Sigmoid colon (tissue), 7 donors: ENCODE measurements at regions of chr19 and their contacts with region 1.

Region 1: DNA sequence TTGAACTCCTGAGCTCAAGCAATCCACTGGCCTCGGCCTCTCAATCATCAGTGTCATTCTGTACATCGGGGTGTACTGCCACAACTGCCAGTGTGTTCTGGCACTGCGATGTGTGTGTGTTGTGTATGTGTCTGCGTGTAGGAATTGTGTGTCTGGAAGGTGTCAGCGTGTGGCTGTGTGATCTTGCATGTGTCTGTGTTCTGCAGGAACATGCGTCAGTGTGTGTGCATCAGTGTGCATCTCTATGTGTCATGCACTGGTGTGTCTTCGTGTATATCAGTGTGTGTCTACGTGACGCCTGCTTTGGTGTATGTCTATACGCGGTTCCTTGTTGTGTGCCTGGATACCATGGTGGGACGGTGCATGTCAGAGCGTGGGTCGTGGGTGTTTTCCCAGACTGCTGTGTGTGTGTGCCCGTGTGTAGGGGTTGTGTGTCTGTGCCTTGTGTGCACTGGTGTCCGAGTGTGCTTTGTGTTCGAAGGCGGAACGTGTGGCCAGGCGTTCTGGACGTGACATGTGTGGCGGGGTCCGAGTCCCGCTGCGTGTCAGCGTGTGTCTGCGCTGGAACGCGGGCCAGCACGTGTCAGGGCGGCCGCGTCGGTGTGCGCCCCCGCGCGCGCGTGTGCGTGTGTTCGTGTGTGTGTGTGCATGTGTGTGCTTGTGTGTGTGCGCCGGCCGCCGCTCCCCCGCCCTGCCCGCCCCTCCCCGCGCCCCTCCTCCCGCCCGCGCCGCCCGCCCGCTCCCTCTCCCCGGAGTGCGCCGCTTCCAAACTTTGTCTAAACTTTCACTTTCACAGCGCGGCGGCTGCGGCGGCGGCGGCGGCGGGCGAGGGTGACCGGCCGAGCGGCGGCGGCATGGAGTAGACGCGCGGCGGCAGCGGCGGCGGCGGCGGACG is at the start of gene NFIX:
- DNase-seq: peak; percentile 86
- H3K4me3 ChIP-seq: peak within 1 kb of the TSS; percentile 86 to 97 (median 90)
- H3K27ac ChIP-seq: peak within 1 kb of the TSS; percentile 92 to 98 (median 98)
- H3K4me1 ChIP-seq: peaks cover 0 to 39% (median 35%) of the 10 kb centered on the region in 4 donors
- H3K27me3 ChIP-seq: no peaks in the 10 kb centered on the region
- CTCF ChIP-seq: no peak
- EP300 ChIP-seq: no peak
- POLR2A ChIP-seq: no peak
- total RNA-seq, gene NFIX: 44.1 to 104 (median 58.5) TPM

Region 2: GRCh38 chr19:13079542-13079986 is 84.6 kb after region 1 on chr19:
- intact Hi-C with region 1: loop called (anchors 5 kb)
- DNase-seq: peak; percentile 90
- H3K4me3 ChIP-seq: no peak overlapping the region
- H3K27ac ChIP-seq: peak overlapping the region; percentile 79 to 97 (median 88)
- H3K4me1 ChIP-seq: peaks cover 0 to 84% (median 73%) of the 10 kb centered on the region in 4 donors
- H3K27me3 ChIP-seq: no peaks in the 10 kb centered on the region
- CTCF ChIP-seq: no peak
- EP300 ChIP-seq: peak in 2 of 4 donors; percentile 41 to 56
- POLR2A ChIP-seq: no peak

Region 3: DNA sequence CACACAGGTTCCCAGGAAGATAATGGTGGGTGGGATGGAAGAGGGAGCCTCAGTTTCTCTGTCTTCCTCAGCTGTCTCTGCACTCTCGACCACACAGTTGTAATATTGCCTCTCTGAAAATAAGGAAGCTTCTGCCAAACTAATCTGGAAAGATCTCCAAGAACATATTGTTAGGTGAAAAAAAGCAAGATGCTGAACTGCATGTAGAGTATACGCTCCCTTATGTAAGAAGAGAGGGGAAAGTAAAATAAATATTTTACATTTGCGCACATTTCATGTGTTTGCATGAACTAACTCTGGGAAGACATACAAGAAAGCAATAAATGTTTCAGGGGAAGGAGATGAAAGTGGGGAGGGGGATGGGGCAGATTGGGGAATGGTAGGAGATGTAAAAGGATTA is 553.2 kb after region 1 on chr19:
- intact Hi-C with region 1: no loop called
- DNase-seq: no peak
- H3K4me3 ChIP-seq: no peak overlapping the region
- H3K27ac ChIP-seq: no peak overlapping the region
- H3K4me1 ChIP-seq: no peaks in the 10 kb centered on the region
- H3K27me3 ChIP-seq: peaks cover 0 to 7% (median 3%) of the 10 kb centered on the region in 3 donors
- CTCF ChIP-seq: no peak
- EP300 ChIP-seq: no peak
- POLR2A ChIP-seq: no peak